ENCODE measurements at regions of chr9 and their contacts with region 1.

Region 1: DNA sequence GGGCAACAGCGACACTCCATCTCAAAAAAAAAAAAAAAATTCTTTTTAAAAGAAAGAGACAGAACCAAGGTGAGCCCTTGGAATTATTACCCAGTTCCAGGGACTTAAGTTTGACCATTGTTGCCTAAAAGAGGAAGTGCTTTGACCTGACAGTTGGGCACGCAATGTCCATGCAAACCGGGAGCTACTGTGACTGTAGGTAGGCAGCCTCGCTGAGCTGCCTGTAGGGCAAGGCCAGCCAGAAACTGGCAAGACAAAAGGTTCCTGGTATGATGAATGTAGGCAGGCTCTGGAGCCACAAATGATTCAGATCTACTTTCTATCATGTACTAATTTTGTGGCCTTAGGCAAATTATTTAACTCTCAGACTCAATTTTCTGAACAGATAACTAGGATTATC is 334.8 kb upstream of the ZNF462 start:
- DNase-seq: no peak
- H3K4me3 ChIP-seq: no peak overlapping the region
- H3K27ac ChIP-seq: no peak overlapping the region
- H3K4me1 ChIP-seq: no peaks in the 10 kb centered on the region
- H3K27me3 ChIP-seq: no peaks in the 10 kb centered on the region
- CTCF ChIP-seq: no peak
- EP300 ChIP-seq: no peak
- POLR2A ChIP-seq: no peak

Region 2: DNA sequence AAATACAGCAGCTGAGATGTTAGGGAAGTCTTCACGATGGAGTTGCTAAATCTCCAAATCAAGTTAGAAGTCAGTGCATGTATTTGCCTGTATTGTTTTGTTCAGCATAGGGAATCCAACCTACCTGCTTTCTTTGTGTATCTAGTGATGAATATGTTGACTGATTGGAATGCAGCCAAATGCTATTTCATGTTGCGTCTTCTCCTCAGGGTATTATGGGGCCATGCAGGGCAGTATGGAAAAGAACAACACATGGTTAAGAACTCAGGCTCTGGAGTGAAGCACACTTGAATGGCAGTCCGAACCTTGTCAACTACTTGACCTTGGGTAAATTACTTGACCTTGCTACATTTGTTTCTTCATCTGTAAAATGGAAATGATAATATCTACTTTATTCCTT is 194.6 kb before region 1 on chr9:
- intact Hi-C with region 1: no loop called
- DNase-seq: no peak
- H3K4me3 ChIP-seq: no peak overlapping the region
- H3K27ac ChIP-seq: no peak overlapping the region
- H3K4me1 ChIP-seq: no peaks in the 10 kb centered on the region
- H3K27me3 ChIP-seq: no peaks in the 10 kb centered on the region
- CTCF ChIP-seq: no peak
- EP300 ChIP-seq: no peak
- POLR2A ChIP-seq: no peak

Region 3: DNA sequence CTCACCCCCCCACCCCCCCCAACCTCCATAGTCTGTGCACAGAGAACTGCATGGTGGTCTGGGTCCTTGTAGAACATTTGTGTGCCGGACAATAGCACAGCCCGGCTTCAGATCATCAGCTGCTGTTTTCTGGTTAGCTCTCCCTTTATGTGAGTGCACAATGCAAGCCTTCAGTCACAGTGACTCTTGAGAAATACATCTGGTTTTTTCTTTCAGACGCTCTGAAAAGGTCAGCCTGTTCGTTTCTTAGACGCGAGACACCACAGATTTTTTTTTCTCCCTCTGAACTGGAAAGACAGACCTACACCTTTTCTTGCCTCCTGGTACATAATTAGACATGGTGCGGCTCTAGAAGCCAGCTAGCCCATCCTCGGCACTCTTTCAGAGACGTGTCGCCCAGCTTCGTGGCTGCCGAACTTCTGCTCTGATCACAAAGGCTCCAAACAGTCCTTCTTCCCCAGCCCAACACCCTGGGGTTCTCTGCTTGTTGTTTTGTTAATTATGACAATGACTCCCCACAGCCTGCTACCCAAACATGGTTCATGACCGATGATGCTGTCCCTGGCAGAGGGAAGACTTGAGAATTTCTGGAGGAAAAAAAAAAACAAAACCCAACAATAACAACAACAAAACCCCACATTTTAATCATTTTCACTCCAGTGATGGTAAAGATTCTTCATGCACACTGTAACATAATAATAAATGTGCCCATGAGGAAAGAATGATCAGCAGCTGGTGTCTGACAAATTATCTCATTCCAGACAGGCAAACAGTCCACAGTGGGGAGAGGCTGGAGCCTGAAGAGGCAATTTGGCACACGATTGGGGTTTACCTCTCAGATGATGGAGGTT is 93.4 kb after region 1 on chr9:
- intact Hi-C with region 1: loop called (anchors 10 kb)
- DNase-seq: no peak
- H3K4me3 ChIP-seq: no peak overlapping the region
- H3K27ac ChIP-seq: peak overlapping the region in 3 of 4 donors; percentile 23 to 58 (median 35)
- H3K4me1 ChIP-seq: peaks cover 3 to 24% (median 12%) of the 10 kb centered on the region in 4 donors
- H3K27me3 ChIP-seq: no peaks in the 10 kb centered on the region
- CTCF ChIP-seq: no peak
- EP300 ChIP-seq: no peak
- POLR2A ChIP-seq: no peak

Region 4: GRCh38 chr9:106657926-106658325 is 129.8 kb after region 1 on chr9:
- intact Hi-C with region 1: no loop called
- DNase-seq: no peak
- H3K4me3 ChIP-seq: no peak overlapping the region
- H3K27ac ChIP-seq: no peak overlapping the region
- H3K4me1 ChIP-seq: peaks cover 0 to 17% (median 5%) of the 10 kb centered on the region in 4 donors
- H3K27me3 ChIP-seq: no peaks in the 10 kb centered on the region
- CTCF ChIP-seq: no peak
- EP300 ChIP-seq: no peak
- POLR2A ChIP-seq: no peak

Region 5: GRCh38 chr9:107060062-107060461 is 531.9 kb after region 1 on chr9:
- intact Hi-C with region 1: no loop called
- DNase-seq: no peak
- H3K4me3 ChIP-seq: no peak overlapping the region
- H3K27ac ChIP-seq: no peak overlapping the region
- H3K4me1 ChIP-seq: no peaks in the 10 kb centered on the region
- H3K27me3 ChIP-seq: no peaks in the 10 kb centered on the region
- CTCF ChIP-seq: no peak
- EP300 ChIP-seq: no peak
- POLR2A ChIP-seq: no peak